ENCODE measurements at regions of chr13 and their contacts with region 1.

Region 1: DNA sequence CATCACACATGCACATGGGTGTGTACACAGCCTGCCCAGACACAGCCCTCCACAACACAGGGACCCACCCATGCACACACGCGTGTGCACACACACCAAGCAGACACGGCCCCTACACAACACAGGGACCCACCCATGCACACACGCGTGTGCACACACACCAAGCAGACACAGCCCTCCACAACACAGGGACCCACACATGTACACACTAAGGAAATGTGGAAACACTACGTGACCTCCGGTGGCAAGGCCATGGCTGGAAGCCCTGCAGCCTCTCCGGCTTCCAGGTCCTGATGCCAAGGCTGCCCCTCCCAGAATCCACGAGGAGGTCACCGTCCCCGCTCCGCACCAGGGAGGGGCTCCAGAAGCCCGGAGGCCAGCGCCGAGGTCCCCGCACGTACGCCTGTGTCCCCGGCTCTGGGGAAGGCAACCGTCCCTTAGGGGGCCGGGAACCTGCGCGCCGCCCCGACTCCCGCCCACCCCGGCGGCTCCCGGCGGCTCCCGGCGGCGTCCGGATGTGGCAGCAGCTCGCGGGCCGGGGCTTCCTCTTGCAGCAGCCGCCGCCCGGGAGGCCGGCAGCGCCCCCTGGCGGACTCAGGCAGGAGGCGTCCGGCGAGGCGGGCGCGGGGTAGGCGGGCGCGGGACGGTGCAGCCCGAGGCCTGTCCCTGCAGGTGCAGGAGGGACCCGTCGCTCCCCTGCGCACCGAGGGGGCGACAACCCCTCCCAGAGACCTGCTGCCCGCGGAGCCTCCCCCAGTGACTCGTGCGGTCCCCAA is 29.8 kb upstream of the GRTP1 start:
- DNase-seq: peak; percentile 93
- CTCF ChIP-seq: peak; percentile 97

Region 2: DNA sequence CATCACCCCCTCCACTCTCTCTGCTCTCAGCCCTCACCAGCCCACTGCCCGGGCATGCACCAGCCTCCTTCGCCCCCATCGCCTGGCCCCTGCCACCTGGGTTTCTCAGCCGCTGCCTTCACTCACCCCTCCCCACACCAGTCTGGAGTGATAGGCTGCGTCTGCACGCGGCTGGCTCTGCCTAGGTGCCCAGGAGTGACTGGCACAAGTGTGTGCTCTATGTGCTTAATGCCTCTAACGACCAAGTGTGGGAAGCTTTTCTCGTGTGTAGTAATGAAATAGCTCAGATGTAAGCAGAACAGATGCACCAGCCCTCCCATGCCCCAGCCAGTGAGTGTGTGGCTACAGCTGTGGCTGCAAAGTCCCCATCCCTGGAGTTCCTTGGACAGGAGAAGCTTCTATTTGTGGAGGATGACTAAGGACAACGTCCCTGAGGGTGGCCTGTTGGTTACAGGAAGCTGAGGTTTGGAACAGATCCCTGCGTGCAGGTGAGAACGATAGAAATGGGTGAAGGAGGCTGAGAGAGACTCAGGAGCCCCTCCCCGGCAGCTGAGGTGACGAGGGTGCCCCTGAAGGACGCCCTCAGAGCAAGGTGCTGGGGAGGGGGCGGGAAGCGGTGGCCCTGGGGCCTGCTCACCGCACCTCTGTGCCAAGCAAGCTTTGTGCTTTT is 668.3 kb before region 1 on chr13:
- in situ Hi-C with region 1: no loop called
- DNase-seq: no peak
- CTCF ChIP-seq: no peak

Region 3: DNA sequence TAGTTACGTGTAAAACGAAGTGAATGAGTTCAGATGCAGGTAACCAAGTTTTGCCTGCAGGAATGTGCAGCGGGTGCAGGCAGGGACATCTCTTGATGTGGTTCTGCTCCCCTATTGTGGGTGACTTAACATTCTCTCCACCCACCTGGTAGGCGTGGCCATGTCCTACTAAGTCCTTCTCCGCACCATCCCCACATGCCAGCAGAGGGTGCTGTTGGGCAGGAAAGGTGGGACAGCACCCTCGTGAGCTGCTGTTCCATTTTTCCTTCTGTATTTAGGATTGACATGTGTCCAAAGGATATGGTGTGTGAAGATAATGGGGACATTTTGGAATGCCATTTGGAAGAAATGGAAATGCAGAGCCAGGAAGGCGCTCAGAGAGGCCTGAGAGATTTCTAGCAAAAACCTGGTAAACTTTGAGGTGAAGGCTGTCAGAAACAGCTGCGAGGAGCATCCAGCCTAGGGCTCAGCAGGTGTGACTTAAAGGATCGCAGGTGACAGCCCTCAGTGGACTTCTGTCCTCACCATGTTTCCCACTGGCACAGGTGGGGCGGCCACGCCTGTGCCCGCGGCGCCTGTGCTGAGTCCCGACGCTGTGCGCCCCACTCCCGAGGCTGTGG is 451.0 kb before region 1 on chr13:
- in situ Hi-C with region 1: loop called (anchors 25 kb)
- DNase-seq: peak; percentile 95
- CTCF ChIP-seq: peak; percentile 96

Measured in GM13977 (cell line).